Activated naive CD4-positive, alpha-beta T cell treated with anti-CD3 and anti-CD28 coated beads, Interleukin-2, amount 10 ng/mL, durations not matched to agents 7 days and 5 days (primary cell): ENCODE measurements at regions of chr6 and their contacts with region 1.

Region 1: GRCh38 chr6:130211691-130212090 is 11.1 kb downstream of the SAMD3 start:
- DNase-seq: no peak
- H3K4me3 Mint-ChIP-seq: peak overlapping the region; percentile 55
- H3K27ac Mint-ChIP-seq: no peak overlapping the region
- H3K4me1 Mint-ChIP-seq: peaks cover 59% of the 10 kb centered on the region
- H3K27me3 Mint-ChIP-seq: no peaks in the 10 kb centered on the region

Region 2: GRCh38 chr6:129672881-129673643 is 538.6 kb before region 1 on chr6:
- CTCF ChIA-PET with region 1: no interaction called
- DNase-seq: peak; percentile 35
- H3K4me3 Mint-ChIP-seq: peak overlapping the region; percentile 59
- H3K27ac Mint-ChIP-seq: peak overlapping the region; percentile 94
- H3K4me1 Mint-ChIP-seq: peaks cover 66% of the 10 kb centered on the region
- H3K27me3 Mint-ChIP-seq: peaks cover 3% of the 10 kb centered on the region

Region 3: DNA sequence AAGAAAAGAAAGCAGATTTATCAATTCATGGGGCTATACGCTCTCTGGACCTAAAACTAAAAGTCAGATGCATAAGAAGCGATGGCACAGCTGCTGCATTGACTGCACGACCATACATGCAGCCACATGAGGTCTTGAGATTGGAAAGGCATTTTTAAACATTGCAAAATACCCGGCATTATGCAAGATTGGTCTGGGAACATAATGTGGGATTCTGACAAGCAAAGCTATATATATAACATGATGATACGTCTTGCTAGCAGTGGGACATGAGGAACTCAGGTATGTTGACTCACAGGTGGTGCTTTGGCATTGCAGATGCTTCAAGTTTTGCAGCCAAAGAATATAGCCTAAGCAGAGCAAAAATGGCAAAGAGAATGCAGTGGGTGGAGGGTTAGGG is 44.0 kb before region 1 on chr6:
- CTCF ChIA-PET with region 1: no interaction called
- DNase-seq: no peak
- H3K4me3 Mint-ChIP-seq: no peak overlapping the region
- H3K27ac Mint-ChIP-seq: no peak overlapping the region
- H3K4me1 Mint-ChIP-seq: peaks cover 2% of the 10 kb centered on the region
- H3K27me3 Mint-ChIP-seq: peaks cover 5% of the 10 kb centered on the region

Region 4: DNA sequence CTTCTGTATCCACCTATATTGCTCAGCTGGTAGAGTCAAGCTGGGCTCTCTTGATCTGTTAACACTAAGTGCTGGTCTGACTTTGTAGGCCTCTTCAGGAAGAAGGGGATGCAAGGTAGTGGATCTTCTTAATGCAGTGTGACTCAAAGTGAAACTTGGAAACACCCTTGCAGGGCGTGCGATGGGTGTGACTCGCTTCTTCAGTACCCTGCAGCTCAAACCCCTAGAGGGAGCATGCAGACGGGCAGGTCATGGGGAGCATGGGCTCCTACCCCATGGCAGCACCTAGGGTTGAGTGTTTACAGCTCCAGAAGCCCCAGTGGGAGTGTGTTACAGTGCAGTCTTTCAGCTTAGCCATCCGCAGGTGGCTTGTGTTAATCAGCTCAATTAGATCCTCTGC is 11.8 kb after region 1 on chr6:
- CTCF ChIA-PET with region 1: interaction called, 10 read pairs
- DNase-seq: peak; percentile 86
- H3K4me3 Mint-ChIP-seq: peak overlapping the region; percentile 60
- H3K27ac Mint-ChIP-seq: peak overlapping the region; percentile 96
- H3K4me1 Mint-ChIP-seq: peaks cover 52% of the 10 kb centered on the region
- H3K27me3 Mint-ChIP-seq: no peaks in the 10 kb centered on the region